ENCODE measurements at regions of chr11 and their contacts with region 1.

Region 1: DNA sequence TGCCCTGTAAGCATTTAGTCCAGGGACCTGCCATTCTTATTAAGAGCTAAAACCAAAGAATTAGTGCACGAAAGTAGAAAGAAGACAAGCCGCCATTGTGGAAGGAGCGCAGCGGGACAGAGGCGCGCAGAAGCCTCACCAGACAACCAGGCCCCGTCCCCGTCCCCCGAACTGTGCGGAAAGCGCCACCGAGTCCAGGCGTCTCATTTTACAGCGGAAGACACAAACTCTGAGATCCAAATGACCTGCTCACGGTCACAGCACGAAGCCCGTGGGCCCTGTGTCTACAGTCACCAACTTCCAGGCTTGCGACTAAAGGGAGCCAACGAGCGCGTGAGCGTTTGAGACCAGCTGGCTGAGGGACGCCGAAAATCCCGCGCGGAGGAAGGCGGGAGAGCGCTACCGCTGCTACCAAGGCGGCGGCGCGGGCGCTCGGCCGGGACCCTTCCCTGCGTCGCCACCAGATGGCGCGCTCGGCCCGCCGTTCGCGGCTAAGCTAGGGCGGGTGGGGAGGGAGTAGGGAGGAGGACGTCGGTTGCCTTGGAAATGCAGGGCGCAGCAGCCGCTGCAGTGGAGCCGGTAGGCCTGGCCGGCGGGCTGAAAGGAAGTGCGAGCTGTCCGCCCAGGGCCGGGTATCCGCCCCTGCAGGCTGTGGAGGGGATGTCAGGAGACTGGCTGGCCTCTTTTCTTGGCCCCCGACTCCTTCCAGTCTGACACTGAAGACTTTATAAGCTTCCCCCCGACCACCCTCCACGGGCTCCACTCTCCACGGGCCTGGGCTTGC is 434 bp upstream of the CCDC83 start:
- DNase-seq: peak; percentile 85
- H3K4me3 Mint-ChIP-seq: peak overlapping the region; percentile 76
- H3K27ac Mint-ChIP-seq: peak overlapping the region; percentile 87
- H3K4me1 Mint-ChIP-seq: no peaks in the 10 kb centered on the region
- H3K27me3 Mint-ChIP-seq: no peaks in the 10 kb centered on the region
- CTCF ChIP-seq: peak; percentile 86

Region 2: GRCh38 chr11:85694386-85694980 is 160.3 kb before region 1 on chr11:
- CTCF ChIA-PET with region 1: interaction called, 14 read pairs
- POLR2A ChIA-PET with region 1: no interaction called
- intact Hi-C with region 1: loop called (anchors 1 kb)
- DNase-seq: peak; percentile 45
- H3K4me3 Mint-ChIP-seq: no peak overlapping the region
- H3K27ac Mint-ChIP-seq: no peak overlapping the region
- H3K4me1 Mint-ChIP-seq: no peaks in the 10 kb centered on the region
- H3K27me3 Mint-ChIP-seq: peaks cover 16% of the 10 kb centered on the region
- CTCF ChIP-seq: peak; percentile 45

Region 3: DNA sequence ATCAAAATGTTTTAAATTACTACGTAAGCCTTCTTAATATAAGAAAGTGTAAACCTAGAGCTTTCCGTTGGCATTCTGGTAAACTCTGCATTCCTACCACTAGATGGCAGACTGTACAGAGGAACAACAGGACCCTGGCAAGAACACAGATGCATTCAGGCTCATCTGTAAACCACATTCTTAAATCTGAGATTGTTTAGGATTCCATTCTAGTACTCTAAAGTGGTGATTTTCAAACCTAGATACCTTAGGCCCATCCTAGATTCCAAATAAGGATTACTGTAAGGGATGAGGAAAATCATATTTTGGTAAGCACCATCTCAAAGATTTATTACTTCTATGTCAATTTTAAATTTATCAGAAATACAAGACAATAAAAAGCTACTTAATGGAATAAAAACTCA is 187.2 kb after region 1 on chr11:
- CTCF ChIA-PET with region 1: interaction called, 7 read pairs
- POLR2A ChIA-PET with region 1: interaction called, 5 read pairs
- intact Hi-C with region 1: loop called (anchors 10 kb)
- DNase-seq: peak; percentile 87
- H3K4me3 Mint-ChIP-seq: peak overlapping the region; percentile 2
- H3K27ac Mint-ChIP-seq: peak overlapping the region; percentile 55
- H3K4me1 Mint-ChIP-seq: peaks cover 39% of the 10 kb centered on the region
- H3K27me3 Mint-ChIP-seq: no peaks in the 10 kb centered on the region
- CTCF ChIP-seq: peak; percentile 78

Region 4: GRCh38 chr11:86291466-86292262 is 436.9 kb after region 1 on chr11:
- CTCF ChIA-PET with region 1: interaction called, 4 read pairs
- POLR2A ChIA-PET with region 1: no interaction called
- intact Hi-C with region 1: loop called (anchors 1 kb)
- DNase-seq: peak; percentile 77
- H3K4me3 Mint-ChIP-seq: no peak overlapping the region
- H3K27ac Mint-ChIP-seq: no peak overlapping the region
- H3K4me1 Mint-ChIP-seq: peaks cover 6% of the 10 kb centered on the region
- H3K27me3 Mint-ChIP-seq: no peaks in the 10 kb centered on the region
- CTCF ChIP-seq: peak; percentile 78

Region 5: GRCh38 chr11:86818466-86819192 is 963.9 kb after region 1 on chr11:
- CTCF ChIA-PET with region 1: no interaction called
- POLR2A ChIA-PET with region 1: no interaction called
- intact Hi-C with region 1: loop called (anchors 2 kb)
- DNase-seq: peak; percentile 75
- H3K4me3 Mint-ChIP-seq: no peak overlapping the region
- H3K27ac Mint-ChIP-seq: no peak overlapping the region
- H3K4me1 Mint-ChIP-seq: peaks cover 21% of the 10 kb centered on the region
- H3K27me3 Mint-ChIP-seq: no peaks in the 10 kb centered on the region
- CTCF ChIP-seq: peak; percentile 59